Sigmoid colon (tissue), 7 donors: ENCODE measurements at regions of chr10 and their contacts with region 1.

Region 1: DNA sequence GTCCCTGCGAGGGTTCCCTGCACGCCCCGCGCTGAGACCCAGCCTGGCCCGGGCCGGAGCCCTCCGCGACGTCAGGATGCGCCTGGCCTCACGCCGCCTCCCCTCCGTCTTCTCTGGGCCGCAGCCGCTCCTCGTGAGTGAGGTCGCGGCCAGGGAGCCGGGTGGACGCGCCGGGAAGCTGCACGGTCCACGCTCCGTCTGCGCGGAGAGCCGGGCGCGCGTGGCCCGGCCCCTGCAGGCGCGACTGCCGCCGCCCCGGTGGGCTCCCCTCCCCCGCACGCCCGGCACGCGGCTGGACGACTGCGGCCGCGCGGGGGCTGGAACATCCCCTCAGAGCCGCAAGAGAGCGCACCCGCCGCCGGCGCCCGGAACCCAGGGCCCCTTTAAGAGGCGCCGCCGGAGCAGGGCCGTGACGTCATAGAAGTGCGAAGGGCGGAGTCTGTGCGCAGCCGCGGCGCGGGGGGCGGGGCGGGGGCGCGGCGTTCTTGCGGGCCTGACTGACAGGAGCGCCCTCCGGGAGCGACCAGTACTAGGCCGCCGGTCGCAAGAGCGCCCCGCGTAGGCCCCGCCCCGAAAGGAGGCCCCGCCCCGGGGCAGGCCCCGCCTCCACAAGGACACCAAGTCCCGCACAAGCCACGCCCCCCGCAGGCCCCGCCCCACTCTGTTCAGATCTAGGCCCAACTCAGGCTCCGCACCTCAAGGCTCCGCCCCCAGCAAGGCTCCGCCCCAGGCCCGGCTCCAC is 445 bp upstream of the INPP5A start:
- DNase-seq: peak; percentile 100
- H3K4me3 ChIP-seq: peak overlapping the region; percentile 76 to 87 (median 82)
- H3K27ac ChIP-seq: peak overlapping the region; percentile 90 to 98 (median 96)
- H3K4me1 ChIP-seq: peaks cover 0 to 56% (median 52%) of the 10 kb centered on the region in 4 donors
- H3K27me3 ChIP-seq: no peaks in the 10 kb centered on the region
- CTCF ChIP-seq: no peak
- EP300 ChIP-seq: peak in 2 of 4 donors; percentile 29 to 51
- POLR2A ChIP-seq: peak; percentile 6 to 29

Region 2: GRCh38 chr10:131981429-131982184 is 555.5 kb before region 1 on chr10 and contains the start of gene BNIP3:
- intact Hi-C with region 1: loop called (anchors 10 kb)
- DNase-seq: peak; percentile 97
- H3K4me3 ChIP-seq: peak within 1 kb of the TSS; percentile 88 to 99 (median 94)
- H3K27ac ChIP-seq: peak within 1 kb of the TSS; percentile 85 to 92 (median 87)
- H3K4me1 ChIP-seq: peaks cover 0 to 43% (median 32%) of the 10 kb centered on the region in 4 donors
- H3K27me3 ChIP-seq: no peaks in the 10 kb centered on the region
- CTCF ChIP-seq: peak in 1 of 4 experiments; percentile 19
- EP300 ChIP-seq: no peak
- POLR2A ChIP-seq: peak; percentile 55 to 84
- total RNA-seq, gene BNIP3: 55.9 to 125 (median 95.4) TPM

Region 3: GRCh38 chr10:132387764-132388210 is 149.4 kb before region 1 on chr10:
- intact Hi-C with region 1: loop called (anchors 5 kb)
- DNase-seq: peak; percentile 86
- H3K4me3 ChIP-seq: peak overlapping the region in 2 of 4 donors; percentile 5 to 12
- H3K27ac ChIP-seq: peak overlapping the region in 2 of 4 donors; percentile 10 to 47
- H3K4me1 ChIP-seq: peaks cover 0 to 10% (median 0%) of the 10 kb centered on the region in 4 donors
- H3K27me3 ChIP-seq: no peaks in the 10 kb centered on the region
- CTCF ChIP-seq: peak; percentile 41 to 66 (median 64)
- EP300 ChIP-seq: no peak
- POLR2A ChIP-seq: no peak

Region 4: GRCh38 chr10:132458593-132459300 is 78.4 kb before region 1 on chr10:
- intact Hi-C with region 1: loop called (anchors 1 kb)
- DNase-seq: no peak
- H3K4me3 ChIP-seq: no peak overlapping the region
- H3K27ac ChIP-seq: no peak overlapping the region
- H3K4me1 ChIP-seq: peaks cover 0 to 20% (median 19%) of the 10 kb centered on the region in 4 donors
- H3K27me3 ChIP-seq: no peaks in the 10 kb centered on the region
- CTCF ChIP-seq: peak; percentile 96 to 99 (median 98)
- EP300 ChIP-seq: no peak
- POLR2A ChIP-seq: no peak

Region 5: GRCh38 chr10:132516771-132517725 is 20.1 kb before region 1 on chr10:
- intact Hi-C with region 1: loop called (anchors 2 kb)
- DNase-seq: peak; percentile 99
- H3K4me3 ChIP-seq: peak overlapping the region in 3 of 4 donors; percentile 7 to 32 (median 8)
- H3K27ac ChIP-seq: peak overlapping the region; percentile 80 to 94 (median 90)
- H3K4me1 ChIP-seq: peaks cover 0 to 64% (median 59%) of the 10 kb centered on the region in 4 donors
- H3K27me3 ChIP-seq: no peaks in the 10 kb centered on the region
- CTCF ChIP-seq: no peak
- EP300 ChIP-seq: peak in 2 of 4 donors; percentile 35 to 69
- POLR2A ChIP-seq: no peak

Region 6: GRCh38 chr10:132575356-132576201 is 38.4 kb after region 1 on chr10:
- intact Hi-C with region 1: loop called (anchors 2 kb)
- DNase-seq: no peak
- H3K4me3 ChIP-seq: peak overlapping the region in 2 of 4 donors; percentile 7 to 10
- H3K27ac ChIP-seq: peak overlapping the region; percentile 70 to 83 (median 76)
- H3K4me1 ChIP-seq: peaks cover 0 to 85% (median 80%) of the 10 kb centered on the region in 4 donors
- H3K27me3 ChIP-seq: no peaks in the 10 kb centered on the region
- CTCF ChIP-seq: no peak
- EP300 ChIP-seq: peak in 1 of 4 donors; percentile 29
- POLR2A ChIP-seq: no peak

Region 7: GRCh38 chr10:132616170-132616995 is 79.2 kb after region 1 on chr10:
- intact Hi-C with region 1: no loop called
- DNase-seq: no peak
- H3K4me3 ChIP-seq: no peak overlapping the region
- H3K27ac ChIP-seq: peak overlapping the region in 1 of 4 donors; percentile 56
- H3K4me1 ChIP-seq: peaks cover 0 to 53% (median 20%) of the 10 kb centered on the region in 4 donors
- H3K27me3 ChIP-seq: no peaks in the 10 kb centered on the region
- CTCF ChIP-seq: no peak
- EP300 ChIP-seq: no peak
- POLR2A ChIP-seq: no peak

Region 8: GRCh38 chr10:132631341-132631735 is 94.2 kb after region 1 on chr10:
- intact Hi-C with region 1: loop called (anchors 1 kb)
- DNase-seq: peak; percentile 96
- H3K4me3 ChIP-seq: no peak overlapping the region
- H3K27ac ChIP-seq: peak overlapping the region; percentile 88 to 98 (median 96)
- H3K4me1 ChIP-seq: peaks cover 0 to 97% (median 90%) of the 10 kb centered on the region in 4 donors
- H3K27me3 ChIP-seq: no peaks in the 10 kb centered on the region
- CTCF ChIP-seq: no peak
- EP300 ChIP-seq: peak in 2 of 4 donors; percentile 57 to 78
- POLR2A ChIP-seq: peak in 1 of 2 donors; percentile 39